Naive thymus-derived CD4-positive, alpha-beta T cell (primary cell): ENCODE measurements at regions of chr15 and their contacts with region 1.

Region 1: GRCh38 chr15:84570164-84570735 is 30.6 kb upstream of the ZSCAN2 start:
- DNase-seq: peak; percentile 13 to 68 (median 40)
- ATAC-seq: peak; percentile 63
- H3K4me3 ChIP-seq: peak overlapping the region; percentile 67
- H3K4me3 Mint-ChIP-seq: peak overlapping the region; percentile 78 to 97 (median 86)
- H3K27ac ChIP-seq: peak overlapping the region; percentile 67
- H3K27ac Mint-ChIP-seq: peak overlapping the region; percentile 65 to 93 (median 82)
- H3K4me1 ChIP-seq: peaks cover 0 to 5% of the 10 kb centered on the region in 2 donors
- H3K4me1 Mint-ChIP-seq: peaks cover 0 to 20% (median 10%) of the 10 kb centered on the region in 7 donors
- H3K27me3 ChIP-seq: no peaks in the 10 kb centered on the region
- H3K27me3 Mint-ChIP-seq: peaks cover 0 to 3% (median 0%) of the 10 kb centered on the region in 5 donors

Region 2: GRCh38 chr15:84600851-84601838 is 30.9 kb after region 1 on chr15 and contains the start of gene ZSCAN2:
- CTCF ChIA-PET with region 1: interaction called, 5 read pairs
- POLR2A ChIA-PET with region 1: no interaction called
- intact Hi-C with region 1: loop called (anchors 2 kb)
- DNase-seq: peak; percentile 83 to 93 (median 90)
- ATAC-seq: peak; percentile 98
- H3K4me3 ChIP-seq: peak within 1 kb of the TSS; percentile 96
- H3K4me3 Mint-ChIP-seq: peak within 1 kb of the TSS; percentile 89 to 99 (median 96)
- H3K27ac ChIP-seq: peak within 1 kb of the TSS; percentile 77
- H3K27ac Mint-ChIP-seq: peak within 1 kb of the TSS; percentile 67 to 97 (median 88)
- H3K4me1 ChIP-seq: peaks cover 29 to 36% of the 10 kb centered on the region in 2 donors
- H3K4me1 Mint-ChIP-seq: peaks cover 53 to 89% (median 71%) of the 10 kb centered on the region in 7 donors
- H3K27me3 ChIP-seq: no peaks in the 10 kb centered on the region
- H3K27me3 Mint-ChIP-seq: no peaks in the 10 kb centered on the region
- total RNA-seq, gene ZSCAN2: 4.8 to 13.0 (median 6.8) TPM

Region 3: DNA sequence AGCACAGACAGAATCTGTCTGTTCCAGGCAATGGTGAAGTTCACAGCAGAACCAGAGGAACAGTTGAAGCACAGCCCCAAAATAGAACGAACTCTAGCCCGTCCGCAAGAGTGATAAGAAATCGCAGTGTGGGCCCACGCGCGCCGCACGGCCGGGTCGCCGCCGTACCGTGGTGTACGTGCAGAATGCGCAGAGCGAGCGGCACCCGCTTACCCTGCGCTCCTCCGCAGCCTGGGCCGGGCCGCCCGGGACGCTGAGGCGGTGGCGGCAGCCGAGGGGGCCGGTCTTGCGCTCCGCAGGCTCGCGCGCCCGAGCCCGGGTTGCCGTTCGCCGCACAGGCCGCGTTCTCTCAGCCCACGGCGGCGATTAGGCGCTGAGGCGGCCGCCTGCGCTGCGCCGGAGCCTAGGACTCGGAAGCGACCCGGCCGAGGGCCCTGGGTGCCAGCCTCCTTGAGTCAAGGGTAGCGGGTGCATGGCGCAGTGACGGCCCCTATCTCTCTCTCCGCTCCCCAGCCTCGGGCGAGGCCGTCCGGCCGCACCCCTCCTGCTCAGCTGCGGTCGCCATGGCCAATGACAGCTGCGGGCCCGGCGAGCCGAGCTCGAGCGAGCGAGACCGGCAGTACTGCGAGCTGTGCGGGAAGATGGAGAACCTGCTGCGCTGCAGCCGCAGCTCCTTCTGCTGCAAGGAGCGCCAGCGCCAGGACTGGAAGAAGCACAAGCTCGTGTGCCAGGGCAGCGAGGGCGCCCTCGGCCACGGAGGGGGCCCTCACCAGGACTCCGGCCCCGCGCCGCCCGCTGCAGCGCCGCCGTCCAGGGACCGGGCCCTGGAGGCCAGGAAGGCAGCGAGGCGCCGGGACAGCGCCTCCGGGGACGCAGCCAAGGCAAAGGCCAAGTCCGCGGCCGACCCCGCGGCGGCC is 63.3 kb after region 1 on chr15:
- CTCF ChIA-PET with region 1: interaction called, 3 read pairs
- POLR2A ChIA-PET with region 1: no interaction called
- intact Hi-C with region 1: loop called in 1 of 2 experiments (anchors 1 kb)
- DNase-seq: peak; percentile 48 to 77 (median 66)
- ATAC-seq: peak; percentile 67
- H3K4me3 ChIP-seq: peak overlapping the region; percentile 96
- H3K4me3 Mint-ChIP-seq: peak overlapping the region; percentile 84 to 99 (median 98)
- H3K27ac ChIP-seq: peak overlapping the region; percentile 78
- H3K27ac Mint-ChIP-seq: peak overlapping the region; percentile 79 to 98 (median 93)
- H3K4me1 ChIP-seq: peaks cover 26 to 40% of the 10 kb centered on the region in 2 donors
- H3K4me1 Mint-ChIP-seq: peaks cover 23 to 58% (median 53%) of the 10 kb centered on the region in 7 donors
- H3K27me3 ChIP-seq: no peaks in the 10 kb centered on the region
- H3K27me3 Mint-ChIP-seq: no peaks in the 10 kb centered on the region

Region 4: GRCh38 chr15:84883433-84883832 is 313.2 kb after region 1 on chr15:
- CTCF ChIA-PET with region 1: no interaction called
- POLR2A ChIA-PET with region 1: no interaction called
- intact Hi-C with region 1: loop called in 1 of 2 experiments (anchors 1 kb)
- DNase-seq: no peak
- ATAC-seq: no peak
- H3K4me3 ChIP-seq: no peak overlapping the region
- H3K4me3 Mint-ChIP-seq: no peak overlapping the region
- H3K27ac ChIP-seq: no peak overlapping the region
- H3K27ac Mint-ChIP-seq: no peak overlapping the region
- H3K4me1 ChIP-seq: no peaks in the 10 kb centered on the region
- H3K4me1 Mint-ChIP-seq: no peaks in the 10 kb centered on the region
- H3K27me3 ChIP-seq: no peaks in the 10 kb centered on the region
- H3K27me3 Mint-ChIP-seq: peaks cover 0 to 10% (median 0%) of the 10 kb centered on the region in 5 donors

Region 5: GRCh38 chr15:85865070-85865684 is 1294.9 kb after region 1 on chr15:
- CTCF ChIA-PET with region 1: no interaction called
- POLR2A ChIA-PET with region 1: no interaction called
- intact Hi-C with region 1: no loop called
- DNase-seq: no peak
- ATAC-seq: no peak
- H3K4me3 ChIP-seq: no peak overlapping the region
- H3K4me3 Mint-ChIP-seq: no peak overlapping the region
- H3K27ac ChIP-seq: no peak overlapping the region
- H3K27ac Mint-ChIP-seq: no peak overlapping the region
- H3K4me1 ChIP-seq: no peaks in the 10 kb centered on the region
- H3K4me1 Mint-ChIP-seq: peaks cover 0 to 13% (median 8%) of the 10 kb centered on the region in 7 donors
- H3K27me3 ChIP-seq: no peaks in the 10 kb centered on the region
- H3K27me3 Mint-ChIP-seq: peaks cover 0 to 19% (median 0%) of the 10 kb centered on the region in 5 donors